ENCODE measurements at regions of chr10 and their contacts with region 1.

Region 1: GRCh38 chr10:22655311-22655981 is 58.9 kb downstream of the PIP4K2A start:
- DNase-seq: no peak
- ATAC-seq: no peak
- H3K4me3 ChIP-seq: no peak overlapping the region
- H3K4me3 Mint-ChIP-seq: peak overlapping the region; percentile 49
- H3K27ac ChIP-seq: peak overlapping the region in 1 of 2 donors; percentile 29
- H3K27ac Mint-ChIP-seq: peak overlapping the region; percentile 66
- H3K4me1 ChIP-seq: peaks cover 75 to 78% of the 10 kb centered on the region in 2 donors
- H3K4me1 Mint-ChIP-seq: peaks cover 91% of the 10 kb centered on the region
- H3K27me3 ChIP-seq: no peaks in the 10 kb centered on the region
- H3K27me3 Mint-ChIP-seq: no peaks in the 10 kb centered on the region
- CTCF ChIP-seq: no peak

Region 2: GRCh38 chr10:22436884-22437619 is 218.4 kb before region 1 on chr10:
- CTCF ChIA-PET with region 1: no interaction called
- POLR2A ChIA-PET with region 1: no interaction called
- intact Hi-C with region 1: no loop called
- DNase-seq: peak; percentile 96
- ATAC-seq: peak; percentile 86
- H3K4me3 ChIP-seq: peak overlapping the region; percentile 65 to 93 (median 86)
- H3K4me3 Mint-ChIP-seq: peak overlapping the region; percentile 98
- H3K27ac ChIP-seq: peak overlapping the region; percentile 96 to 97
- H3K27ac Mint-ChIP-seq: peak overlapping the region; percentile 99
- H3K4me1 ChIP-seq: peaks cover 19 to 24% of the 10 kb centered on the region in 2 donors
- H3K4me1 Mint-ChIP-seq: peaks cover 36% of the 10 kb centered on the region
- H3K27me3 ChIP-seq: no peaks in the 10 kb centered on the region
- H3K27me3 Mint-ChIP-seq: no peaks in the 10 kb centered on the region
- CTCF ChIP-seq: peak; percentile 25

Region 3: DNA sequence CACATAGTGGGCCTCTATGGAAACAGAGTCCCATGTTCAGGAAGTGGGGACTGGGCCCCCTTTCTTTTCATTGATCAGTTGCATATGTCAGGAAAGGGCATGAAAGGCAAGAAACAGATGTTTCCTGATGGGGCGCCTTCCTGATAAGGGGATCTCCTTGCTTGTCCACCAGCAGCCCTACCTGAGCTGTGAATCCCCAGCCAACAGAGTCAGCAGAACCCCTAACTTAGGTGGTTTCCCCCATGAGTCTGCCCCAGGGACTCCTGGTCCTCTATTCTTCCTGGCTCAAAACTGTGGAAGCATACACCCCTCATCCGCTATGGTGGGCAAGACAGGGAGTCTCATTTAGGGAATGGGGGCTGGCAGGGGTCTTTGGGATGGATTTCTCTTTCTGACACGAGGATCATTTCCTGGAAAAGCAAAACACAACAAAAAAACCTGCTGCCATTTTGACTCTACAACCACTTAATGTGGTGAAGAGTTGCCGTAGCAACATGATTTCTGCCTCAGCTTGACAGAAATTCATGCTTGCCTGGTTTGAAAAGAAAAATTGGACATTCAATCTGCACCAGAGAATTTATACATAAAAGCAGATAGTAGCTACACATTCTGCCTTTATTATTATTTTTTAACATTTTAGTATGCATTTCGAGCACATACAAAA is 190.3 kb before region 1 on chr10:
- CTCF ChIA-PET with region 1: no interaction called
- POLR2A ChIA-PET with region 1: no interaction called
- intact Hi-C with region 1: no loop called
- DNase-seq: no peak
- ATAC-seq: no peak
- H3K4me3 ChIP-seq: no peak overlapping the region
- H3K4me3 Mint-ChIP-seq: no peak overlapping the region
- H3K27ac ChIP-seq: no peak overlapping the region
- H3K27ac Mint-ChIP-seq: no peak overlapping the region
- H3K4me1 ChIP-seq: peaks cover 6 to 8% of the 10 kb centered on the region in 2 donors
- H3K4me1 Mint-ChIP-seq: peaks cover 13% of the 10 kb centered on the region
- H3K27me3 ChIP-seq: no peaks in the 10 kb centered on the region
- H3K27me3 Mint-ChIP-seq: peaks cover 3% of the 10 kb centered on the region
- CTCF ChIP-seq: no peak

Region 4: DNA sequence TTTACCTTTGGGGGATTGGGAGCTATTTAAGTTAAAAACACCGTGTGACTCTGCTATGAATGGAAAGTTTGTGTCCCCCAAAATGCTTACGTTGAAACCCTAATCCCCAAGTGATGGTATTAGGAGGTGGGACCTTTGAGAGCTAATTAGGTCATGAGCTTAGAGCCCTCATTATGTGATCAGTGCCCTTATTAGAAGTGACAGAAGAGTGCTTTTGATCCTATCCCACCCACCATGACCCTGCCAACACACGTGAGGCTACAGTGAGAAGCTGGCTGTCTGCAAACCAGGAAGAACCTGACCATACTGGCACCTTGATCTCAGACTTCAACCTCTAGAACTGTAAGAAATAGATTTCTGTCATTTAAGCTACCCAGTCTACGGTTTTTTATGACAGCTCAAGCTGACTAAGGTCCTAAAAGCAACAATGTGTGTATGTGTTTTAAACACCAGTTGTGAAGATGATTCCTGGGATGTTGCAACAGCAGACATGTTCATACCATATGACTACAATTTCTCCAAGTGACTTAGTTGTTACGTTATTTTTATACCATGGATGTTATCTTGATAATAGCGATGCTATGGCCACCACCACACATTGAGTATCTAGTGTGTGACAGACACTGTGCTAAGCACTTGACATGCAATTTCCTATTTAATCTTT is 65.5 kb before region 1 on chr10:
- CTCF ChIA-PET with region 1: no interaction called
- POLR2A ChIA-PET with region 1: no interaction called
- intact Hi-C with region 1: no loop called
- DNase-seq: no peak
- ATAC-seq: no peak
- H3K4me3 ChIP-seq: no peak overlapping the region
- H3K4me3 Mint-ChIP-seq: no peak overlapping the region
- H3K27ac ChIP-seq: no peak overlapping the region
- H3K27ac Mint-ChIP-seq: peak overlapping the region; percentile 3
- H3K4me1 ChIP-seq: peaks cover 22 to 26% of the 10 kb centered on the region in 2 donors
- H3K4me1 Mint-ChIP-seq: peaks cover 31% of the 10 kb centered on the region
- H3K27me3 ChIP-seq: no peaks in the 10 kb centered on the region
- H3K27me3 Mint-ChIP-seq: no peaks in the 10 kb centered on the region
- CTCF ChIP-seq: no peak

Region 5: GRCh38 chr10:22666287-22667092 is 11.0 kb after region 1 on chr10:
- CTCF ChIA-PET with region 1: interaction called, 5 read pairs
- POLR2A ChIA-PET with region 1: interaction called, 4 read pairs
- intact Hi-C with region 1: loop called (anchors 1 kb)
- DNase-seq: peak; percentile 45
- ATAC-seq: peak; percentile 76
- H3K4me3 ChIP-seq: peak overlapping the region in 3 of 5 experiments; percentile 5 to 30 (median 15)
- H3K4me3 Mint-ChIP-seq: peak overlapping the region; percentile 76
- H3K27ac ChIP-seq: peak overlapping the region in 1 of 2 donors; percentile 59
- H3K27ac Mint-ChIP-seq: peak overlapping the region; percentile 56
- H3K4me1 ChIP-seq: peaks cover 22 to 38% of the 10 kb centered on the region in 2 donors
- H3K4me1 Mint-ChIP-seq: peaks cover 62% of the 10 kb centered on the region
- H3K27me3 ChIP-seq: no peaks in the 10 kb centered on the region
- H3K27me3 Mint-ChIP-seq: no peaks in the 10 kb centered on the region
- CTCF ChIP-seq: no peak

Region 6: GRCh38 chr10:22693371-22693784 is 37.9 kb after region 1 on chr10:
- CTCF ChIA-PET with region 1: no interaction called
- POLR2A ChIA-PET with region 1: no interaction called
- intact Hi-C with region 1: loop called (anchors 5 kb)
- DNase-seq: no peak
- ATAC-seq: peak; percentile 57
- H3K4me3 ChIP-seq: no peak overlapping the region
- H3K4me3 Mint-ChIP-seq: peak overlapping the region; percentile 37
- H3K27ac ChIP-seq: no peak overlapping the region
- H3K27ac Mint-ChIP-seq: peak overlapping the region; percentile 72
- H3K4me1 ChIP-seq: peaks cover 31 to 33% of the 10 kb centered on the region in 2 donors
- H3K4me1 Mint-ChIP-seq: peaks cover 79% of the 10 kb centered on the region
- H3K27me3 ChIP-seq: no peaks in the 10 kb centered on the region
- H3K27me3 Mint-ChIP-seq: no peaks in the 10 kb centered on the region
- CTCF ChIP-seq: no peak

Measured in B cell (primary cell).